Heart right ventricle (tissue), 16 donors: ENCODE measurements at regions of chr1 and their contacts with region 1.

Region 1: GRCh38 chr1:21176586-21177555 is at the start of gene EIF4G3:
- DNase-seq: peak; percentile 99 to 100
- ATAC-seq: peak; percentile 96 to 99 (median 98)
- H3K4me3 ChIP-seq: peak within 1 kb of the TSS; percentile 75 to 98 (median 92)
- H3K27ac ChIP-seq: peak within 1 kb of the TSS; percentile 68 to 98 (median 96)
- H3K4me1 ChIP-seq: peaks cover under 1 to 33% (median 17%) of the 10 kb centered on the region in 9 donors
- H3K27me3 ChIP-seq: no peaks in the 10 kb centered on the region
- CTCF ChIP-seq: peak in 1 of 9 donors; percentile 10
- total RNA-seq, gene EIF4G3: 30.9 to 50.2 (median 37.2) TPM

Region 2: DNA sequence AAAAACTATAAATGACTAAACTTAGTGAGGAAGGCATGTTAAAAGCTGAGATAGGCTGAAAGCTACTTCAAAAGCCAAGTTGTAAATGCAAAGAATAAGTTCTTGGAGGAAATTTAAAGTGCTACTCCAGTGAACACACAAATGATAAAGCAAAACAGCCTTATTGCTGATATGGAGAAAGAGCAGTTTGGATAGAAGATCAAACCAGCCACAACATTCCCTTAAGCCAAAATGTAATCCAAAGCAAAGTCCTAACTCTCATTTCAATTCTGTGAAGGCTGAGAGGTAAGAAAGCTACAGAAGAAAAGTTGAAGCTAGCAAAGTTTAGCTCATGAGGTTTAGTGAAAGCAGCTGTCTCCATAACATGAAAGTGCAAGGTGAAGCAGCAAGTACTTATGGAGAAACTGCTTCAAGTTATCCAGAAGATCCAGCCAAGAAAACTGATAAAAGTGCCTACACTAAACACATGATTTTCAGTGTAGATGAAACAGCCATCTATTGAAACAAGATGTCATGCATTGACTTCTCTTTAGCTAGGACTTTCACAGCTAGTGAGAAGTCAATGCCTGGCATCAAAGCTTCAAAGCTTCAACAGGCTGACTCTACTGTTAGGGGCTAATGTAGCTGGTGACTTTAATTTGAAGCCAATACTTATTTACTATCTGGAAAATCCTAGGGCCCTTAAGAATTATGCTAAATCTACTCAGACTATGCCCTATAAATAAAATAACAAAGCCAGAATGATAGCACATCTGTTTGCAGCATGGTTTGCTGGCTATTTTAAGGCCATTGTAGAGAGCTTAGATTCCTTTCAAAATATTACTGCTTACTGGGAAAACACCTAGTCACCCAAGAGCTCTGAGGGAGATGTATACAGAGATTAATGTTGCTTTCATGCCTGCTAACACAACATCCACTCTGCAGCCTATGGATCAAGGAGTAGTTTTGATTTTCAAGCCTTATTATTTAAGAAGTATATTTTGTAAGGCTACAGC is 188.7 kb before region 1 on chr1:
- intact Hi-C with region 1: loop called in 1 of 10 experiments (anchors 5 kb)
- DNase-seq: no peak
- ATAC-seq: no peak
- H3K4me3 ChIP-seq: no peak overlapping the region
- H3K27ac ChIP-seq: no peak overlapping the region
- H3K4me1 ChIP-seq: peaks cover 0 to 17% (median 6%) of the 10 kb centered on the region in 9 donors
- H3K27me3 ChIP-seq: no peaks in the 10 kb centered on the region
- CTCF ChIP-seq: no peak

Region 3: DNA sequence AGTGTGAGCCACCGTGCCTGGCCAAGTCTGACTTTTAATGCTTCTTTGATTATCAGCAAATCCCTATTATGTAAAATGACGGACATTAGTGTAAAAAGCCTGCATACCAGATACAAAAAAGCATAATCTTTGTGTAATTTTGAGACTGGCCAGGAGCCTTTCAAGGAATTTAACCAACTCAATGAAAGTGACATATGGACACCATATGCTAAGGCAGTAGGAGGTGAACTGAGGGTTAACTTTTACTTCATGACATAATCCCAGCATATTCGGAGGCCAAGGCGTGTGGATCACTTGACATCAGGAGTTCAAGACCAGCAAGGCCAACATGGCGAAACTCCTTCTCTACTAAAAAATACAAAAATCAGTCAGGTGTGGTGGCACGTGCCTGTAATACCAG is 94.8 kb before region 1 on chr1:
- intact Hi-C with region 1: loop called in 1 of 10 experiments (anchors 10 kb)
- DNase-seq: no peak
- ATAC-seq: no peak
- H3K4me3 ChIP-seq: no peak overlapping the region
- H3K27ac ChIP-seq: no peak overlapping the region
- H3K4me1 ChIP-seq: peaks cover 0 to 6% (median 0%) of the 10 kb centered on the region in 9 donors
- H3K27me3 ChIP-seq: no peaks in the 10 kb centered on the region
- CTCF ChIP-seq: no peak

Region 4: GRCh38 chr1:21152423-21153100 is 24.3 kb before region 1 on chr1:
- intact Hi-C with region 1: no loop called
- DNase-seq: no peak
- ATAC-seq: peak in 4 of 8 donors; percentile 43 to 55 (median 46)
- H3K4me3 ChIP-seq: no peak overlapping the region
- H3K27ac ChIP-seq: peak overlapping the region in 8 of 10 donors; percentile 2 to 71 (median 26)
- H3K4me1 ChIP-seq: peaks cover 11 to 67% (median 34%) of the 10 kb centered on the region in 9 donors
- H3K27me3 ChIP-seq: no peaks in the 10 kb centered on the region
- CTCF ChIP-seq: no peak